ENCODE measurements at regions of chr4 and their contacts with region 1.

Region 1: DNA sequence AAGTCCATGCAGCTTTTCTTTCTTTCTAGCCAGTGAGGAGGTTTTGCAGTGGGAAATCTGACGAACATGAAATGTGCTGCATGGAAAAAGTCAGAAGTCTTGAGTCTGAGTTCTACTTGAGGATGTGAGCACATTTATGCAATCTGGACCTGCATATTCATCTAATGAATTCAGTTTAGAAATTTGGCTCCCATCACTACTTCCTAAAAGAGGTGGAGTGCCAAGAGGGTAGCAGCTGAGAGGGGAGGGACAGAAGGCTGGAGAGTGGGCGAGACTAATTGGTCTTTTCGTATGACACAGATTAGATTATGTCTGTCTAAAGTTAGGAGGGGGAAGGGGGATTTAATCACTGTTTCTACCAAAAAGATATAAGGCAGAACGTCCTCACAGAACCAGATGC is 535.9 kb downstream of the IQCM start:
- DNase-seq: no peak
- ATAC-seq: no peak
- H3K4me3 ChIP-seq: no peak overlapping the region
- H3K27ac ChIP-seq: no peak overlapping the region
- H3K4me1 ChIP-seq: no peaks in the 10 kb centered on the region
- H3K27me3 ChIP-seq: no peaks in the 10 kb centered on the region
- CTCF ChIP-seq: no peak
- EP300 ChIP-seq: no peak
- POLR2A ChIP-seq: no peak
- RAD21 ChIP-seq: no peak

Region 2: DNA sequence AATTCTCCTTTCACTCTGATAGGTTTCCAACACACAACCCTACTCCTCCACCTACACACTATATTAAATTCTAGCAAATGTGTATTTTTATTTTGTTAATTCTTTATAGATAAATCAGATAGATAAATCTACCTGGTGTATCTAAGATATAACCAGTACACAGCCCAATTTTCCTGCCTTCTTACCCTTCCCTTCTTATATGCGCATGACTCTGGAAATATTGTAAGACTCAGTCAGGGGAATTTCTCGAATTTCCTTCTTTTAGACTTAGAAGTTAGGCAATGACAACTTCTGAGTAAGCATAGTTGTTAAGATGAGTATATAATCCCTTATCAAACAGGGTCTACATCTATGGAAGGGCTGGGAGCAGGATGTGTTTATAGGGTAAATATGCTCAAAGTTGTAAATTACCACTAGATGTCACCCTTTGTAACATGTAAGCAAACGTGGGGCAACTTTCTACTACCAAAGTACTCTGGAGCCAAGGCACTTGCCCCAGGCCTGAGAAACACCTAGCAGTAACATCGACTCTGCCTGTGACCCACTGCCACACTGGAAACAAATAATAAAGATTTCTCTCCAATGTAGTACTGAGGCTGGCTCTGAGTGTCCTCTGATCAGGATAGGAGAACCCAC is 91.1 kb after region 1 on chr4:
- CTCF ChIA-PET with region 1: no interaction called
- POLR2A ChIA-PET with region 1: no interaction called
- RAD21 ChIA-PET with region 1: no interaction called
- SMC1A ChIA-PET with region 1: no interaction called
- in situ Hi-C with region 1: no loop called
- intact Hi-C with region 1: no loop called
- DNase-seq: no peak
- ATAC-seq: peak; percentile 92
- H3K4me3 ChIP-seq: no peak overlapping the region
- H3K27ac ChIP-seq: no peak overlapping the region
- H3K4me1 ChIP-seq: no peaks in the 10 kb centered on the region
- H3K27me3 ChIP-seq: no peaks in the 10 kb centered on the region
- CTCF ChIP-seq: peak; percentile 25 to 58 (median 39); a peak in 4 of 6 replicates
- EP300 ChIP-seq: no peak
- POLR2A ChIP-seq: no peak
- RAD21 ChIP-seq: peak; percentile 45

Region 3: GRCh38 chr4:149914119-149915115 is 634.6 kb after region 1 on chr4:
- CTCF ChIA-PET with region 1: no interaction called
- POLR2A ChIA-PET with region 1: no interaction called
- RAD21 ChIA-PET with region 1: no interaction called
- SMC1A ChIA-PET with region 1: no interaction called
- in situ Hi-C with region 1: no loop called
- intact Hi-C with region 1: loop called (anchors 5 kb)
- DNase-seq: no peak
- ATAC-seq: peak; percentile 89
- H3K4me3 ChIP-seq: no peak overlapping the region
- H3K27ac ChIP-seq: no peak overlapping the region
- H3K4me1 ChIP-seq: no peaks in the 10 kb centered on the region
- H3K27me3 ChIP-seq: no peaks in the 10 kb centered on the region
- CTCF ChIP-seq: peak; percentile 53 to 75 (median 72)
- EP300 ChIP-seq: no peak
- POLR2A ChIP-seq: no peak
- RAD21 ChIP-seq: peak; percentile 33; the same call in 1 of the 2 replicates

Measured in GM12878 (cell line).